GM12878 (cell line): ENCODE measurements at regions of chr7 and their contacts with region 1.

Region 1: GRCh38 chr7:156238366-156239133 is 402.0 kb upstream of the RNF32 start:
- DNase-seq: no peak
- ATAC-seq: no peak
- H3K4me3 ChIP-seq: no peak overlapping the region
- H3K27ac ChIP-seq: no peak overlapping the region
- H3K4me1 ChIP-seq: no peaks in the 10 kb centered on the region
- H3K27me3 ChIP-seq: no peaks in the 10 kb centered on the region
- CTCF ChIP-seq: no peak
- EP300 ChIP-seq: no peak
- POLR2A ChIP-seq: no peak
- RAD21 ChIP-seq: no peak

Region 2: GRCh38 chr7:156039971-156040677 is 198.4 kb before region 1 on chr7:
- CTCF ChIA-PET with region 1: no interaction called
- POLR2A ChIA-PET with region 1: interaction called, 12 read pairs
- RAD21 ChIA-PET with region 1: no interaction called
- SMC1A ChIA-PET with region 1: no interaction called
- in situ Hi-C with region 1: no loop called
- intact Hi-C with region 1: no loop called
- DNase-seq: no peak
- ATAC-seq: no peak
- H3K4me3 ChIP-seq: no peak overlapping the region
- H3K27ac ChIP-seq: no peak overlapping the region
- H3K4me1 ChIP-seq: no peaks in the 10 kb centered on the region
- H3K27me3 ChIP-seq: peaks cover 0 to 1% of the 10 kb centered on the region in 2 experiments; a peak in 2 of 4 replicates
- CTCF ChIP-seq: no peak
- EP300 ChIP-seq: no peak
- POLR2A ChIP-seq: no peak
- RAD21 ChIP-seq: no peak